CD8-positive, alpha-beta T cell (primary cell): ENCODE measurements at regions of chr3 and their contacts with region 1.

Region 1: DNA sequence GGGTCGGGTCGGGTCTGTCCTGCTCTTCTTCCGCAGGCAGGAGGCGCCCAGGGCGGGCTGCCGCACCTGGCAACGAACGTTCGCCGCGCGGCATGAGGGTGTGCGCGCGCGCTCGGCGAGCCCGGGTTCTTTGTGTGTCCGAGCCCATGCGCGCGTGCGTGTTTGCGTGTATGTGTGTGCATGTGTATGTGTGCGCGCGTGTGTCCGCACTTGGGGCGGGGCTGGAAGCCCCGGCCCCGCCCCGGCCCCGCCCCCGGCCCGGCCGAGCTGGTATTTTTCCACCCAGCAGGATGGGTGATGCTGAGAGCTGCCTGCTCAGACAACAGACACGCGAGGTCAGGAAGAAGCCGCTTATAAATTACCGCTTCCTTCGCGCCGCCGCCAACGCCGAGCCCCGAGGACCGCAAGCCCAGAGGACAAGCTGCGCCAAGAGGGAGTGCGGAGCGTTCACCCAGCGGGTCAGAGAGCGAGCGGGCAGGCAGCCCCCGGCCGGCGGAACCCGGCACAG is at the start of gene SLC6A6:
- DNase-seq: peak; percentile 87 to 98 (median 95)
- ATAC-seq: peak; percentile 79
- H3K4me3 ChIP-seq: peak within 1 kb of the TSS; percentile 72 to 85
- H3K4me3 Mint-ChIP-seq: peak within 1 kb of the TSS; percentile 97
- H3K27ac ChIP-seq: peak within 1 kb of the TSS; percentile 70 to 91
- H3K27ac Mint-ChIP-seq: peak within 1 kb of the TSS; percentile 96
- H3K4me1 ChIP-seq: peaks cover 34% of the 10 kb centered on the region
- H3K4me1 Mint-ChIP-seq: peaks cover 46% of the 10 kb centered on the region
- H3K27me3 ChIP-seq: no peaks in the 10 kb centered on the region
- H3K27me3 Mint-ChIP-seq: no peaks in the 10 kb centered on the region
- CTCF ChIP-seq: peak; percentile 46
- total RNA-seq, gene SLC6A6: 25.8 to 30.9 TPM

Region 2: DNA sequence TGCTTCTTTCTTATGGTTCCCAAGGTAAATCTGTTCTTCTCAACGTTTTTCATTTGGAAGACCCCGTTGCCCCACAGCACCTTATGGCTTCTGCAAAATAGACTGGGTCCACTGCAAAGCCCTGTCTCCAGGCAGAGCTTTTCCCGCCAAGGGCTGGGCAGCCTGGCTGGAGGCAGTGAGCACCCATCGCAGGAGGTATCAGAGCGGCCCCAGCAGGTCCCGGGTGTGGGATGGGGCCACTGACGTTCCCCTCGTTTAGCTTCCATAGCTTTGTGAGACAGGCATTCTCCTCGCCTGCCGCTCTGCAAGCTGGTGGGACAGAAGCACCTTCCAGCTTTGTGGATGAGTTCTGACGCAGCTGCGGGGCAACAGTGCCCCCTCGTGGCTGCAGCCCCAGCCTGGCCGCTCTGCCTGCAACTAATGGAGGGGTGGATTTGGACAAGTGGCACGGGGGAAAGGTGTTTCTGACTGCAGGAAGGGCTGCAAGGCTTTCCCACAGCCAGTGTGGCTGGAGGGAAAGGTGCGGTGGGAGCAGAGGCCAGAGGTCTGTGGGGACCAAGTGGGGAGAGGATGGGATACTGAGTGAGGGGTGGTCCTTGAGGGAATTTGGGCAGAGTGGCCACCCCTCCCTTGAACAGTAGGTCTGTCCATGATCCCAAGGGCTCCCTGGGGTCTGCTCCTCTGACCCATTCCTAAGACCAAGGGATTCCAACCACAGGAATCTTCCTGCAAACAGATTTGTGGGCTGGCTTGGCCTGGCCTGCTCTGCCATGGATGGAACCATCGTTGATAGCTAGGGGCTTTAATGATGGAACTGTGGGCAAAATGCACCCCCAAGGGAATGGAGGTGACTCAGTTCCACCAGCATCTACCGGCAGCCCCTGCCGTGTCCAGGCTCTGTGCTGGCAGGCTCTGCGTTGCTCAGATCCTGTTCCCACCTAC is 754.0 kb before region 1 on chr3:
- CTCF ChIA-PET with region 1: no interaction called
- POLR2A ChIA-PET with region 1: no interaction called
- intact Hi-C with region 1: loop called in 1 of 2 experiments (anchors 10 kb)
- DNase-seq: peak; percentile 56 to 88 (median 75)
- ATAC-seq: peak; percentile 27
- H3K4me3 ChIP-seq: no peak overlapping the region
- H3K4me3 Mint-ChIP-seq: no peak overlapping the region
- H3K27ac ChIP-seq: no peak overlapping the region
- H3K27ac Mint-ChIP-seq: no peak overlapping the region
- H3K4me1 ChIP-seq: peaks cover 33% of the 10 kb centered on the region
- H3K4me1 Mint-ChIP-seq: peaks cover 39% of the 10 kb centered on the region
- H3K27me3 ChIP-seq: peaks cover 0 to 3% of the 10 kb centered on the region in 2 experiments
- H3K27me3 Mint-ChIP-seq: peaks cover 15% of the 10 kb centered on the region
- CTCF ChIP-seq: peak; percentile 94

Region 3: GRCh38 chr3:14144423-14145075 is 257.8 kb before region 1 on chr3:
- CTCF ChIA-PET with region 1: no interaction called
- POLR2A ChIA-PET with region 1: no interaction called
- intact Hi-C with region 1: loop called in 1 of 2 experiments (anchors 1 kb)
- DNase-seq: peak; percentile 52 to 98 (median 71)
- ATAC-seq: peak; percentile 69
- H3K4me3 ChIP-seq: peak overlapping the region; percentile 15 to 20
- H3K4me3 Mint-ChIP-seq: peak overlapping the region; percentile 66
- H3K27ac ChIP-seq: peak overlapping the region; percentile 95 to 96
- H3K27ac Mint-ChIP-seq: peak overlapping the region; percentile 98
- H3K4me1 ChIP-seq: peaks cover 55% of the 10 kb centered on the region
- H3K4me1 Mint-ChIP-seq: peaks cover 48% of the 10 kb centered on the region
- H3K27me3 ChIP-seq: no peaks in the 10 kb centered on the region
- H3K27me3 Mint-ChIP-seq: no peaks in the 10 kb centered on the region
- CTCF ChIP-seq: no peak

Region 4: DNA sequence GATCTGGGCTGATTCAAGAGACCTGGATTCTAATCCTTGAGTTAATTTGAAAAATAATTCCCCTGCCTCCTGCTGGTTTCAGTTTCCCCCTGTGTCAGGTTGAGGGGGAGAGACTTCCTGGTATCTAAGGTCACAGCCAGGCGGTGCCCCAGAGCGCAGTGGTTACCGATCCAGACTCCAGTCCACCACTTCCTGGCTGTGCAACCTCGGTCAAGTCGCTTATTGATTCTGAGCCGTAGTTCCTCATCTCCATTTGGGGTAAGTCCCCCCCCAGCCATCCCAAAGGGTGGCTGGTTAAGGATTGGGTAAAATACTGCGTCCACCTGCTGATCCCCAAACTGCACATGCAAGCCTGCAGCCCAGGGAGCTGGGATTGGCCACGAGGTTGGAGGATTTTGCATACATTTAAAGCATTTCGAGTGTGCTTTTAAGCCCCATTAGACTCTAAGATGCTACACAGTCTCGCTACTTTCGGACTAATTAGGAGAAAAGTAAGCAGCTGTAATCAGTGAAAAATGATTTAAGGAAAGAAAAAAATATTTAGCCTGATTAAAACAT is 23.8 kb after region 1 on chr3:
- CTCF ChIA-PET with region 1: interaction called, 5 read pairs
- POLR2A ChIA-PET with region 1: interaction called, 81 read pairs
- intact Hi-C with region 1: no loop called
- DNase-seq: peak in 6 of 9 experiments; percentile 45 to 84 (median 65)
- ATAC-seq: peak; percentile 54
- H3K4me3 ChIP-seq: no peak overlapping the region
- H3K4me3 Mint-ChIP-seq: peak overlapping the region; percentile 69
- H3K27ac ChIP-seq: peak overlapping the region in 1 of 2 experiments; percentile 95
- H3K27ac Mint-ChIP-seq: peak overlapping the region; percentile 99
- H3K4me1 ChIP-seq: peaks cover 84% of the 10 kb centered on the region
- H3K4me1 Mint-ChIP-seq: peaks cover 93% of the 10 kb centered on the region
- H3K27me3 ChIP-seq: no peaks in the 10 kb centered on the region
- H3K27me3 Mint-ChIP-seq: no peaks in the 10 kb centered on the region
- CTCF ChIP-seq: no peak

Region 5: DNA sequence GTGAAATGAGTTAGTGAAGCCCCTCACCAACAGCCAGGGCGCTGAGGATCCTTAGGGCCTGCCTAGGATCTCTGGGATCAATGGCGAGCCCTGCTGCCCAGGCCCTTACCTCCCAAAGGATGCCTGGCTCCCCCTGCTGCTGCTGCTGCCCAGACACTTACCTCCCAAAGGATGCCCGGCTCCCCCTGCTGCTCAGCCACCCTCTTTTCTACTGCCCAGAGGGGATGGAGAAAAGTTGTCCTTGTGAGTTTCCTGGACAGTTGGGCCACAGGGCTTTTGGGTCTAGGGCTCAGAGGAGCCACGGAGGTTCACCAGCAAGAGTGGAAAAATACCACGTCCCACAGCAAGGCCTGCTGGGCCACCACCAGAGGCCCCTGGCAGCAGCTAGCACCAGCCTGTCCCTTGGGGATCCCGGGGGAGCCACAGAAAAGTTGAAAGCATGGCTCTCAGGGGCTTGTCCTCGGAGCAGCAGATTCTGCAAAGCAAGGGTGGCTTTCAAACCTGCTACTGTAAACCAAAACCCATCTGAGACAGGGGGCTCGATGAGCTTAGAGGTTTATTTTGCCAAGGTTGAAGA is 59.5 kb after region 1 on chr3:
- CTCF ChIA-PET with region 1: interaction called, 56 read pairs
- POLR2A ChIA-PET with region 1: interaction called, 6 read pairs
- intact Hi-C with region 1: loop called in 1 of 2 experiments (anchors 1 kb)
- DNase-seq: peak in 8 of 9 experiments; percentile 22 to 68 (median 53)
- ATAC-seq: peak; percentile 64
- H3K4me3 ChIP-seq: no peak overlapping the region
- H3K4me3 Mint-ChIP-seq: no peak overlapping the region
- H3K27ac ChIP-seq: no peak overlapping the region
- H3K27ac Mint-ChIP-seq: no peak overlapping the region
- H3K4me1 ChIP-seq: no peaks in the 10 kb centered on the region
- H3K4me1 Mint-ChIP-seq: no peaks in the 10 kb centered on the region
- H3K27me3 ChIP-seq: no peaks in the 10 kb centered on the region
- H3K27me3 Mint-ChIP-seq: no peaks in the 10 kb centered on the region
- CTCF ChIP-seq: no peak

Region 6: DNA sequence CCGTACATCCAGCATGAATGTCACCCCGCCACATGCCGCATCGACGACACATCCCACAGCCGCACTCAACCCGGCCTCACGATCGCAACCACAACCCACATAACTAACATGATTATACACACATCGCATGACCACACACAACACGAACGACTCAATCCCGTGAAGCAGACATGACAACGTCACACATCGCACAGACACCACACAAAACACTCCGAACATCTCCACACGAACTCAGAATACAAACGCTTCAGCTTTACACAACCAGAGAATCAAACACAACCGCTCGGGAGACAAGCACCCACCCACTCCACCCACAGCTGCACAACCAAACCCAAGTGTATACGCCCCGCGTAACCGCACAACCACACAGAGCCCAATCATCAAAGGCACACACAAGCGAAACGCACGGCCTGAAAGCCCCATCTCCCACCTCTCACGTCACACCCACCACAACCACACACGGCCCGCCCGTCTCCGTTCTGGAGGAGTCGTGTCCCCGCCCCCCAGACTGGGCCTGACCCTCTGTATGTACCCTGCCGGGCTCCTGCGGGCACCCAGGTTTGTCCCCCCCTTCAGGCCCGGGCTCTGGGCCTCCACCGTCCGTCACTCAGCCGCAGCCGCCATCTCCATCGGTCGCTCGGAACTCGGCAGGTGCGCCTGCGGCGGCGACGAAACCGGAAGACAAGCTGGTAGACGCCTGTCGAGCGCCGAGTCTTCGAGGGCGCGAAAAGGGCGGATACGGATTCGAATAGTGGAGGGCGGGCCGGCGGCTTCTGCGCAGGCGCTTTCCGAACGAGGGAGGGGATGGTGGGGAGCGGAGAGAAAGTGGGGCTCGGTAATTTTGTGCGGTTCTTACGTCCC is 696.4 kb after region 1 on chr3 and contains the start of gene RBSN:
- CTCF ChIA-PET with region 1: no interaction called
- POLR2A ChIA-PET with region 1: no interaction called
- intact Hi-C with region 1: loop called in 1 of 2 experiments (anchors 5 kb)
- DNase-seq: peak; percentile 87 to 98 (median 94)
- ATAC-seq: peak; percentile 76
- H3K4me3 ChIP-seq: peak within 1 kb of the TSS; percentile 71 to 76
- H3K4me3 Mint-ChIP-seq: peak within 1 kb of the TSS; percentile 88
- H3K27ac ChIP-seq: peak within 1 kb of the TSS; percentile 96 to 98
- H3K27ac Mint-ChIP-seq: peak within 1 kb of the TSS; percentile 95
- H3K4me1 ChIP-seq: peaks cover 16% of the 10 kb centered on the region
- H3K4me1 Mint-ChIP-seq: peaks cover 31% of the 10 kb centered on the region
- H3K27me3 ChIP-seq: no peaks in the 10 kb centered on the region
- H3K27me3 Mint-ChIP-seq: no peaks in the 10 kb centered on the region
- CTCF ChIP-seq: no peak
- total RNA-seq, gene RBSN: 41.9 to 48.1 TPM